AG04450 (cell line): ENCODE measurements at regions of chr10 and their contacts with region 1.

Region 1: GRCh38 chr10:98242823-98243222 is 25.2 kb downstream of the LOXL4 start:
- DNase-seq: no peak
- H3K4me3 ChIP-seq: no peak overlapping the region
- H3K27ac ChIP-seq: no peak overlapping the region
- H3K27me3 ChIP-seq: no peaks in the 10 kb centered on the region
- CTCF ChIP-seq: peak; percentile 69

Region 2: GRCh38 chr10:98302741-98303365 is 60.0 kb after region 1 on chr10:
- CTCF ChIA-PET with region 1: no interaction called
- POLR2A ChIA-PET with region 1: no interaction called
- DNase-seq: no peak
- H3K4me3 ChIP-seq: no peak overlapping the region
- H3K27ac ChIP-seq: no peak overlapping the region
- H3K27me3 ChIP-seq: peaks cover 38% of the 10 kb centered on the region
- CTCF ChIP-seq: no peak

Region 3: DNA sequence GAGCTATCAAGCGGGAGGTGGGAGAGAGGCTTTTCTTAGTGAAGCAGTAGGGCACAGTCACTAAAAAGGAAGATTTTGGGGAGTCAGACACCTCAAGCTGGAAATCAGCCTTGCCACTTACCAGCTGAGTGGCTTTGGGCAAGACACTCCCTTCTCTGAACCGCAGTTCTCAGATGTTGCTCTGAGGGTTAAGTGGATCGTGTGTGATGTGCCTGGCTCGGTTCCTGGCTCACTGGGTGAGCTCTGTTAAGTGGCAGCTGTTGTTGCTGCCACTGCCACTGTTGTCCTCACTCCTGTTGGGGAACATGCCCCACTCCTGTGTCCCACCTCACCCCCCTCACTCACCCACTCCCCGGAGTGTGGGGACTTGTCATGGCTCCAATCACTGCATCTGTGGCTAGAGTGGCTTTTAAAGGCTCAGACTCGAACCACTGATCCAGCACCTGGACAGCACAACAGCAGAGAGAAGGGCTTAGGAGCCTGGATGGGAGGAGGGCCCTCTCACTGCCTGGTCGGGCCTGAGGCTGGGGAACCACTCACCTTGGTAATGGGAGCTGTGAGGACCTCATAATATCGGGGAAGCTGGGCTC is 152.1 kb after region 1 on chr10:
- CTCF ChIA-PET with region 1: interaction called, 17 read pairs
- POLR2A ChIA-PET with region 1: no interaction called
- DNase-seq: no peak
- H3K4me3 ChIP-seq: no peak overlapping the region
- H3K27ac ChIP-seq: peak overlapping the region; percentile 31
- H3K27me3 ChIP-seq: no peaks in the 10 kb centered on the region
- CTCF ChIP-seq: no peak